PC-9 (cell line): ENCODE measurements at regions of chr6 and their contacts with region 1.

Region 1: GRCh38 chr6:112253841-112254816 is at the start of gene LAMA4:
- DNase-seq: peak; percentile 68 to 81
- H3K4me3 ChIP-seq: peak within 1 kb of the TSS; percentile 70
- H3K27ac ChIP-seq: peak within 1 kb of the TSS; percentile 93
- H3K4me1 ChIP-seq: peaks cover 42% of the 10 kb centered on the region
- H3K27me3 ChIP-seq: no peaks in the 10 kb centered on the region
- CTCF ChIP-seq: peak; percentile 48; the same call in 1 of the 2 replicates
- total RNA-seq, gene LAMA4: 58.3 and 91.0 TPM in 2 replicates

Region 2: DNA sequence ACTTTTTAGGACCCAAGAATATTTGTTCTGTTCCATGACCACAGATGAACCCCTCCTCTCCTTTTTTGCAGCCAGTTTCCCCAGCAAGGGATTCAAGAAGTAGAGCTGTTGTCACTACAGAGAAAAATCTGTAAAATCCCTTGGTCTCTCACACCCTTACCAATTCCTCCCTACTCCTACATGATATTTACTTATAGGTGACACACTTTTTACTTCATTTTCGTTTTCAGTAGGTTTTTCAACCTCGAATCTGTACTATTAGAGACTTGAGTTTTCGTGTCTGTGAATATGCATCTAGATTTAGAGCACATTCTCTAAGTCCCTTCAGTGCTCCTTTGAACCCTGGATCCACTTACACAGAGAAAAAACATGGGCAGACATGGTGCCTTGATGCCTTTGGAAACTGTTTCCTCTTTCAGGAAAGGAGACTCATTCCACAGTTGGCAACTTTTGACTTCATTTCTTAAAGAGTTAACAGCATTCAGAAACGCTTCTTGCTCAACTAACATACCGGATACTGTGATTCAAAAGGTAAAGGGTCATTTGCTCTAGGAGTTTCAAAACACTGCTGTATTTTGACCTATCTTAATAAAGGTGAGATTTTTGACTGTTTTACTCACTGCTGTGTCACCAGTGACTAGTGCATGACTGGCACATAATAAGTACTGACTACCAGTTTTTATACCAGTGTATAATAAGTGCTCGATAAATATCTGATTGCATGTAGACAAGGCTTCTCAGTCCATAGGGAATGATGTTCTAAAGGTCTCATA is 50.4 kb before region 1 on chr6:
- CTCF ChIA-PET with region 1: no interaction called
- POLR2A ChIA-PET with region 1: interaction called, 8 read pairs
- intact Hi-C with region 1: loop called (anchors 1 kb)
- DNase-seq: peak; percentile 16 to 100
- H3K4me3 ChIP-seq: peak overlapping the region; percentile 34
- H3K27ac ChIP-seq: peak overlapping the region; percentile 98
- H3K4me1 ChIP-seq: peaks cover 75% of the 10 kb centered on the region
- H3K27me3 ChIP-seq: no peaks in the 10 kb centered on the region
- CTCF ChIP-seq: no peak

Region 3: GRCh38 chr6:112282221-112282620 is 28.1 kb after region 1 on chr6:
- CTCF ChIA-PET with region 1: no interaction called
- POLR2A ChIA-PET with region 1: interaction called, 12 read pairs
- intact Hi-C with region 1: loop called (anchors 2 kb)
- DNase-seq: peak; percentile 39 to 87
- H3K4me3 ChIP-seq: no peak overlapping the region
- H3K27ac ChIP-seq: peak overlapping the region; percentile 57
- H3K4me1 ChIP-seq: peaks cover 44% of the 10 kb centered on the region
- H3K27me3 ChIP-seq: no peaks in the 10 kb centered on the region
- CTCF ChIP-seq: peak; percentile 47; the same call in 1 of the 2 replicates

Region 4: GRCh38 chr6:112311950-112312547 is 57.9 kb after region 1 on chr6:
- CTCF ChIA-PET with region 1: no interaction called
- POLR2A ChIA-PET with region 1: interaction called, 5 read pairs
- intact Hi-C with region 1: loop called (anchors 2 kb)
- DNase-seq: peak in 1 of 2 experiments; percentile 54
- H3K4me3 ChIP-seq: no peak overlapping the region
- H3K27ac ChIP-seq: peak overlapping the region; percentile 9; the same call in 1 of the 2 replicates
- H3K4me1 ChIP-seq: peaks cover 22% of the 10 kb centered on the region
- H3K27me3 ChIP-seq: no peaks in the 10 kb centered on the region
- CTCF ChIP-seq: peak; percentile 94